ENCODE measurements at regions of chr2 and their contacts with region 1.

Region 1: GRCh38 chr2:238449909-238450417 is 23.2 kb downstream of the ASB1 start:
- DNase-seq: peak; percentile 63 to 66
- ATAC-seq: peak; percentile 84 to 93 (median 89)
- H3K4me3 ChIP-seq: no peak overlapping the region
- H3K27ac ChIP-seq: peak overlapping the region in 8 of 10 donors; percentile 21 to 80 (median 55)
- H3K4me1 ChIP-seq: peaks cover 0 to 36% (median 22%) of the 10 kb centered on the region in 9 donors
- H3K27me3 ChIP-seq: peaks cover 0 to 3% (median 0%) of the 10 kb centered on the region in 7 donors
- CTCF ChIP-seq: no peak

Region 2: DNA sequence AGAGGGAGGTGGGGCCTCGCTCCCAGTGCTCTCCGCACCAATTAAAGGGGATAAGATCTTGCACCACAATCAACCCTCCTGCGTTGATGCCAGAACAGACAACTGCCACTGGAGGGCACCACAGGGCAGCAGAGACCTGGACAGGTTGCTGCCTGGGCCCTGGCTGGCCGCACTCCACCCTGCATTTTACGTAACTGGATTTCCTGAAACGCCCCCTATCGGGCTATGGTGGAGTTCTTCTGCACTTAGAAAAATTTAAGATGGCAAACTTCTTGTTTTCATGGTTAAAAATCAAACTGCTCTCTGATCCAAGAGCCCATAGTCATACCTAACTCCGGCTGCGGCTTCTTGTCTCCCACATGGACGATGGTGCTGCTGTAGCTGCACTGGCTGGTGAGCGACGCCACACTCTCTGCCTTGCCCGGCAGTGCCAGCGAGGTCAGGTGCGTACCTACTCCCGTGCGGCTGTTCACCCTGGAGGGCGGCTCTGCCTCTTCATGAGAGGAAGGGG is 193.3 kb before region 1 on chr2:
- intact Hi-C with region 1: no loop called
- DNase-seq: peak; percentile 57 to 62
- ATAC-seq: peak in 7 of 8 donors; percentile 35 to 66 (median 53)
- H3K4me3 ChIP-seq: no peak overlapping the region
- H3K27ac ChIP-seq: no peak overlapping the region
- H3K4me1 ChIP-seq: peaks cover 0 to 13% (median 7%) of the 10 kb centered on the region in 9 donors
- H3K27me3 ChIP-seq: no peaks in the 10 kb centered on the region
- CTCF ChIP-seq: peak; percentile 53 to 80 (median 72)

Region 3: DNA sequence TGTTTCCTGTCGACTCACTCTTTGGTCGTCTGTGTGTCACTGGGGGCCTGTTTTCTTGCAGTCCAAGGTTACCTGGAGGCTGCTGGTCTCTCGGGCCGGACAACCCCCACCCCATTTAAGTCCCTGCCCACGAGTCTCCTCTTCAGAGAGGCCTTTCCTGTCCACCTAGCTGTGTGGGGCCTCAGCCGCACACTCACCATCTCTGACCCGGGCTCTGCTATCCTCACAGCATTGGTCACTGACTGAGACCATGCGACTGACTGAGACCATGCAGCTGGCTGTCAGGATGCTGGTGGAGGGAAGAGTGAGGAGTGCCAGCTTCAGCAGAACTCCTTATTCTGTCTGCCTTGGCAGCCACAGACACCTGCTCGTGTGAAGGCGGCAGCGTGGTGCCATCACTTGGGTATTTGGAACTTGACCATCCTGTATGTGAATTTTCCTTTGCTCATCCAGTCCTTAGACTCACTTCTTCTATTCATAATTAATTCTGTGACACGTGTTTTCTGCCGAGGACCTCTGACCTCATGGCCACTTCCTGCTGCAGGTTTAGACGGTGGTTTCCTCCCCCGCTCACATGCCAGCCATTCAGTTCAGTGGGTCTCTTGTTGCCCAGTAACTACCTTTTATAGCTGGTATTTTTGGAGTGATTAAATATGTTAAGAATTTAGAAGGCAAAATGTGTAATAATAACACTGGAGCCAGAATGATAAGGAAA is 70.7 kb before region 1 on chr2:
- intact Hi-C with region 1: loop called in 3 of 10 experiments (anchors 2 to 5 kb)
- DNase-seq: no peak
- ATAC-seq: peak in 7 of 8 donors; percentile 25 to 60 (median 40)
- H3K4me3 ChIP-seq: no peak overlapping the region
- H3K27ac ChIP-seq: peak overlapping the region in 9 of 10 donors; percentile 1 to 79 (median 62)
- H3K4me1 ChIP-seq: peaks cover 2 to 69% (median 22%) of the 10 kb centered on the region in 9 donors
- H3K27me3 ChIP-seq: no peaks in the 10 kb centered on the region
- CTCF ChIP-seq: no peak

Region 4: DNA sequence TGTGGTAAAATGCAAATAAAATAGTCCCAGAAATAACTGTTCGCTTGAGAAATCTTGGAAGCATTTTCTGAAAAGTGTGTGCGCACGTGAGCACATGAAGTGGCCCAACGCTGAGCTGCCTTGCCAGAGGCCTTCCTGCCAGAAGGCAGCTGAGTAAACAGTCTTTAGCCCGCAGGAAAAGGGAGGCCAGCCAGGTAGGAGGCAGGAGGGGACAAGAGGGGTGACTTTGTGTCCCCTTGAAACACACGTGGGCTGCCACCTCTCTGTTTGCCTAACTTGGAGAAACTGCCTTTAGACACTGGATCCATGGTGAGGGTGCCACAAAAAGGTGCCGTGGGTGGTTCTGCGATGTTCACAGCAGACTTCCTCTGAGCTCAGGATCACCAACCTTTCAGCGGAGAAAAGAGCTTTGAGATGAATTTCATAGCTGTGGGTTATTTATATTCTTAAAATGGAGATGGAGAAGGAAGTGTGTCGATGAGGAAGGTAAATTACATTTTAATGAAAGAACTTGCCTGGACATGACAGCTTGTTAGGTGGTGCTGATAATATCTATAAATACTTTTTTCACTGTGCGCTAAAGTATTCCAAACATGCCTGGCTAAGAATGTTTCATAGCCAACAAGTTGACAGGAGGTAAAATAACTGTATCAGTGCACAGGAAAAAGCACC is 59.9 kb before region 1 on chr2:
- intact Hi-C with region 1: loop called in 1 of 10 experiments (anchors 10 kb)
- DNase-seq: no peak
- ATAC-seq: peak; percentile 55 to 92 (median 84)
- H3K4me3 ChIP-seq: no peak overlapping the region
- H3K27ac ChIP-seq: peak overlapping the region; percentile 43 to 87 (median 79)
- H3K4me1 ChIP-seq: peaks cover 0 to 30% (median 8%) of the 10 kb centered on the region in 9 donors
- H3K27me3 ChIP-seq: no peaks in the 10 kb centered on the region
- CTCF ChIP-seq: no peak

Region 5: DNA sequence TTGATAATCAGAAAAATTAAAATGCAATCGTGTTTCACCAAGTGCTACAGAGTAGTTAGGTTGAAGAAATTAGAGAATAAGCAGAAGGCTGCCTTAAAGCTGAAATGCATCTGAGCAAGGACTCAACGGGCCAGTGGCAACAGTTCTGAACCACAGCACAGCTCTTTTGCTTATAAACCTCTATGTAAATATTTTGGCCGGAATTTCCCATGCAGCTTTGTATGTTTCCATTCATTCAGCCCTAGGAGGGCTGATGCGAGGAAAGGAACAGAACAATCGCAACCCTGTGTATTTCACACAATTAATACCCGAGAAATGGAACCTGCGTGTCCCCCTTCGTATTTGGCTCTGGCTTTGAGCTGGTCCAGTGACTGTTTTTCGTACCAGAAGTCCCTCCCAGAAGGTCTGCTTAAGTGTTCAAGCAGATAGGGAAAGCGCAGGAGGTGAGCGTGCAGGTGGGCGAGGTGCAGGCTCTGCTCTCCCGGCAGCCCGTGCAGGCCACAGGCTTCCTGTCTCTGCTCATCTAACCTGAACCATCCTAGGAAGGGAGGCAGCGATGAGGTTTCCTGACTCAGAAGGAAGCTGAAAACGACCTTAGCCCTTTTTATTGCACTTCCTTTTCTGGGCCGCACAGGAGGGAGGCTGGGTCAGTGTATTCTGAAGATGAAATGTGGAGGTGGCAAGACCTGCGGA is 44.1 kb after region 1 on chr2:
- intact Hi-C with region 1: no loop called
- DNase-seq: no peak
- ATAC-seq: no peak
- H3K4me3 ChIP-seq: no peak overlapping the region
- H3K27ac ChIP-seq: no peak overlapping the region
- H3K4me1 ChIP-seq: no peaks in the 10 kb centered on the region
- H3K27me3 ChIP-seq: peaks cover 0 to 34% (median 14%) of the 10 kb centered on the region in 7 donors
- CTCF ChIP-seq: no peak

Region 6: GRCh38 chr2:238700117-238700457 is 250.1 kb after region 1 on chr2:
- intact Hi-C with region 1: no loop called
- DNase-seq: peak; percentile 41
- ATAC-seq: peak in 7 of 8 donors; percentile 64 to 91 (median 76)
- H3K4me3 ChIP-seq: no peak overlapping the region
- H3K27ac ChIP-seq: peak overlapping the region in 5 of 10 donors; percentile 2 to 65 (median 56)
- H3K4me1 ChIP-seq: peaks cover 0 to 54% (median 14%) of the 10 kb centered on the region in 9 donors
- H3K27me3 ChIP-seq: no peaks in the 10 kb centered on the region
- CTCF ChIP-seq: no peak

Measured in heart right ventricle (tissue), 16 donors.